ENCODE measurements at regions of chr12 and their contacts with region 1.

Region 1: GRCh38 chr12:52278541-52279421 is 4.3 kb downstream of the KRT86 start:
- DNase-seq: no peak
- ATAC-seq: peak; percentile 100
- H3K4me3 ChIP-seq: no peak overlapping the region
- H3K27ac ChIP-seq: no peak overlapping the region
- H3K4me1 ChIP-seq: no peaks in the 10 kb centered on the region
- H3K27me3 ChIP-seq: peaks cover 3% of the 10 kb centered on the region in 2 experiments; a peak in 2 of 4 replicates
- CTCF ChIP-seq: peak; percentile 93 to 98 (median 96)
- EP300 ChIP-seq: no peak
- POLR2A ChIP-seq: no peak
- RAD21 ChIP-seq: peak; percentile 81

Region 2: DNA sequence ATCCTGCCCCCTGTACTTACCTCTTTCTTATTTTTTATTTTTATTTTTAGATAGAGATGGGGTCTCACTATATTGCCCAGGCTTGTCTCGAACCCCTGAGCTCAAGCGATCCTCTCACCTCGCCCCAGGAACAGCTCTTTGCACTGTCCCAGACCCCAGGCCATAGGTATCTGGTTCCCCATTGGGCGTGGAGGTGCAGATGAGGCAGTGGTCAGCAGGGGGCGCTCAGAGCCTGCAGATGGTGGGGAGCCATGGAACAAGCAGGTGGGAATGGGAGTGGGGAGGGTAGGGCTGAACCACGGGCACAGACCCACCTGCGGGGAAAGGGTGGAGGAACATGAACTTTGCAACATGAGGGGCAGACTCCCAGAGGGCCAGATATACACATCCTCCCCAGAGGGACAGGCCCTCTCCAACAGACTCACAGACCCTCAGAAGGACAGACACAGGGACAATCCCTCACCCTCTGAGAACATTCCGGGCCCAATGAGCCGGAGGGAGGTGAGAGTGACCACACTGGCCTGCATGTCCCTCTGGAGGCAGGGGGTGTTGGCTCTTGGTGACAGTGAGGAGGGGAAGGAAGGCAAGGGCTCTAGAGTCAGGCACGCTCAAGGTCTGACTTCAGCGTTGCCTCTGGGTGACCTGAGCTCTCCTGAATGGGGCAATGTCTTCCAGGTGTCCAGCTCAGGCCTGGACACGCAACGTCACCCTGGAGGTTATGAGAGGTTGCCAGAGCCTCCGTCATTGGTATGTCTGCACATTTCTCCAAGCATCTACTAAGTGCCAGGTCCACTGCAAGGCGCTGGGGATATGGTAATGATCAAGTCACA is 121.8 kb before region 1 on chr12:
- CTCF ChIA-PET with region 1: interaction called, 12 read pairs
- POLR2A ChIA-PET with region 1: no interaction called
- RAD21 ChIA-PET with region 1: no interaction called
- SMC1A ChIA-PET with region 1: interaction called, 5 read pairs
- in situ Hi-C with region 1: no loop called
- intact Hi-C with region 1: no loop called
- DNase-seq: no peak
- ATAC-seq: peak; percentile 90
- H3K4me3 ChIP-seq: no peak overlapping the region
- H3K27ac ChIP-seq: no peak overlapping the region
- H3K4me1 ChIP-seq: no peaks in the 10 kb centered on the region
- H3K27me3 ChIP-seq: no peaks in the 10 kb centered on the region
- CTCF ChIP-seq: peak; percentile 89 to 97 (median 96); a peak in 5 of 6 replicates
- EP300 ChIP-seq: no peak
- POLR2A ChIP-seq: no peak
- RAD21 ChIP-seq: peak; percentile 95

Region 3: DNA sequence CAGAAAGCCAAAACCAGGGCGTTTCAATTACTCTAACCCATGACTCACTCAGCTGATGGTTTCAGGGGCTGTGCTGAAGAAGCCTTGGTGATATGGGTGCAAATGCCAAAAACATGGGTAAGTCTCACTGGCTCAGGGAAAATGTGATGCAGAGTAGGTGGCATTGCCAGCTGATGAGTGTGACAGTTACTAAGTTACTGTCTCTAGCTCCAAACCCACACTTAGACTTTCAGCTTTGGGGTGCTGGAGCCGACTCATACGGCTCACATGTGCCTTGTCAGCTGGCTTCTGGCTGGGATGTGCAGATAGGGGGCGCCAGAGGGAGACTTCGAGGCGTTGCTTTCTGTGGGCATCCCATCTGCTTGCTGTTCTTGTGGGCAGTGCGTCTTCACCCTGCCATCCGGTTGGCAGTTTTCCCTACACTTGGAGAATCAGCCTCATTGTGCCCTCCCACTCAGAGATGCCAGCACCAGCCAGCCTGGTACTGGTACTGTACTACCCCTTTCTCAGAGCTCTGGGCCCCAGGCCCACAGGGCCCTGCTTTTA is 56.8 kb before region 1 on chr12:
- CTCF ChIA-PET with region 1: interaction called, 84 read pairs
- POLR2A ChIA-PET with region 1: no interaction called
- RAD21 ChIA-PET with region 1: interaction called, 24 read pairs
- SMC1A ChIA-PET with region 1: interaction called, 7 read pairs
- in situ Hi-C with region 1: no loop called
- intact Hi-C with region 1: no loop called
- DNase-seq: no peak
- ATAC-seq: peak; percentile 92
- H3K4me3 ChIP-seq: no peak overlapping the region
- H3K27ac ChIP-seq: no peak overlapping the region
- H3K4me1 ChIP-seq: peaks cover 6% of the 10 kb centered on the region; the same call in 1 of the 2 replicates
- H3K27me3 ChIP-seq: no peaks in the 10 kb centered on the region; a peak in 1 of 4 replicates
- CTCF ChIP-seq: peak; percentile 48 to 74 (median 67)
- EP300 ChIP-seq: no peak
- POLR2A ChIP-seq: no peak
- RAD21 ChIP-seq: peak; percentile 45

Region 4: GRCh38 chr12:52243856-52244614 is 34.7 kb before region 1 on chr12:
- CTCF ChIA-PET with region 1: interaction called, 42 read pairs
- POLR2A ChIA-PET with region 1: interaction called, 8 read pairs
- RAD21 ChIA-PET with region 1: interaction called, 8 read pairs
- SMC1A ChIA-PET with region 1: interaction called, 7 read pairs
- in situ Hi-C with region 1: no loop called
- intact Hi-C with region 1: no loop called
- DNase-seq: peak; percentile 66
- ATAC-seq: peak; percentile 93
- H3K4me3 ChIP-seq: peak overlapping the region; percentile 42; the same call in 1 of the 2 replicates
- H3K27ac ChIP-seq: peak overlapping the region; percentile 86
- H3K4me1 ChIP-seq: peaks cover 22% of the 10 kb centered on the region
- H3K27me3 ChIP-seq: no peaks in the 10 kb centered on the region
- CTCF ChIP-seq: 0 out of 6 replicates have a peak, but pooled peaks of 1 of the 3 experiments have one; percentile 14
- EP300 ChIP-seq: 0 out of 4 replicates have a peak, but pooled peaks of 1 of the 2 experiments have one; percentile 28
- POLR2A ChIP-seq: peak; percentile 77
- RAD21 ChIP-seq: no peak

Region 5: GRCh38 chr12:52268212-52268611 is 10.6 kb before region 1 on chr12:
- CTCF ChIA-PET with region 1: interaction called, 21 read pairs
- POLR2A ChIA-PET with region 1: no interaction called
- RAD21 ChIA-PET with region 1: no interaction called
- SMC1A ChIA-PET with region 1: no interaction called
- in situ Hi-C with region 1: no loop called
- intact Hi-C with region 1: no loop called
- DNase-seq: no peak
- ATAC-seq: no peak
- H3K4me3 ChIP-seq: no peak overlapping the region
- H3K27ac ChIP-seq: no peak overlapping the region
- H3K4me1 ChIP-seq: no peaks in the 10 kb centered on the region
- H3K27me3 ChIP-seq: peaks cover 0 to 2% of the 10 kb centered on the region in 2 experiments; a peak in 1 of 4 replicates
- CTCF ChIP-seq: no peak
- EP300 ChIP-seq: no peak
- POLR2A ChIP-seq: no peak
- RAD21 ChIP-seq: no peak

Region 6: DNA sequence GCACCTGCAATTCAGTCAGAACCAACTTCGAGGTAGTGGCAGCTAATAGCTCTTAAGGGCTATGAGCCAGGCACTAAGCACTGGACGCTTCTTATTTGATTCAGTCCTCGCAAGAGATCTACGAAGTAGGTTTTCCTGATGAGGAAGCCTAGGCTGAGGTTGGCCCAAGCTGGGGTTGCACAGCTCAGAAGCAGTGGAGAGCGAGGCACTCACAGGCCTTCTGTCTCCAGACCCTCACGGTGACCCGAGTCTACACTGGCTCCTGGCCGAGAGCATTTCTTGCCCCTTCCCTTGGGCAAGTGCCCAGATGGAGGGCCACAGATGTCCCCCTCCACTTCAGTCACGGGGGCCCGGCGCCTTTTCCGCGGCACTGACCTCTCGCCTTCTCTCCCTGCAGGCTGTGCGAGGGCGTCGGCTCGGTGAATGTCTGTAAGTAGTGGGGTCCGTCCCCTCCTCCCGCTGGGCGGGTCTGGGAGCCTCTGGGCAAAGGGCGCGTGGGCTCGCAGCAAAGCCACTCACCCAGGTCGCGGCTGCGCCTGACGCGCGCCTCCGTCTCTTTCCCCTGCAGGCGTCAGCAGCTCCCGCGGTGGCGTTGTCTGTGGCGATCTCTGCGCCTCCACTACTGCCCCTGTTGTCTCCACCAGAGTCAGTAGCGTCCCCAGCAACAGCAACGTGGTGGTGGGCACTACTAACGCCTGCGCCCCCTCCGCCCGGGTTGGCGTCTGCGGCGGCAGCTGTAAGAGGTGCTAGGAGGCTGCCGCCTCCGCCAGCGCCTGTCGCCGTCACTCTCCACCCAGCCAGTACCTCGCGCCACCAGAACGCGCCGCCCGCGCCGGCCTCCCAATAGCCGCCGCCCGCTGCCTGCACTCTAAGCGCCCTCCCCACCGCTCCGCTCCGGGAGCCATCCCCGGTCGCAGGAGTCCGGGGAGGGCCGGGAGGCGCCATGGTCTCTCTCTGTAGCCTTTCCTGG is 29.3 kb after region 1 on chr12:
- CTCF ChIA-PET with region 1: interaction called, 18 read pairs
- POLR2A ChIA-PET with region 1: no interaction called
- RAD21 ChIA-PET with region 1: no interaction called
- SMC1A ChIA-PET with region 1: interaction called, 3 read pairs
- in situ Hi-C with region 1: no loop called
- intact Hi-C with region 1: no loop called
- DNase-seq: no peak
- ATAC-seq: peak; percentile 70
- H3K4me3 ChIP-seq: no peak overlapping the region
- H3K27ac ChIP-seq: no peak overlapping the region
- H3K4me1 ChIP-seq: peaks cover 9% of the 10 kb centered on the region
- H3K27me3 ChIP-seq: peaks cover 13 to 18% of the 10 kb centered on the region in 2 experiments; a peak in 3 of 4 replicates
- CTCF ChIP-seq: no peak
- EP300 ChIP-seq: no peak
- POLR2A ChIP-seq: no peak
- RAD21 ChIP-seq: no peak

Region 7: GRCh38 chr12:52715416-52715815 is 436.6 kb after region 1 on chr12:
- CTCF ChIA-PET with region 1: no interaction called
- POLR2A ChIA-PET with region 1: no interaction called
- RAD21 ChIA-PET with region 1: no interaction called
- SMC1A ChIA-PET with region 1: no interaction called
- in situ Hi-C with region 1: no loop called
- intact Hi-C with region 1: no loop called
- DNase-seq: no peak
- ATAC-seq: no peak
- H3K4me3 ChIP-seq: no peak overlapping the region
- H3K27ac ChIP-seq: no peak overlapping the region
- H3K4me1 ChIP-seq: no peaks in the 10 kb centered on the region
- H3K27me3 ChIP-seq: peaks cover 3 to 8% of the 10 kb centered on the region in 2 experiments; a peak in 3 of 4 replicates
- CTCF ChIP-seq: no peak; a peak in 1 of 6 replicates
- EP300 ChIP-seq: no peak
- POLR2A ChIP-seq: no peak
- RAD21 ChIP-seq: no peak

Measured in GM12878 (cell line).